H1 (cell line): ENCODE measurements at regions of chr6 and their contacts with region 1.

Region 1: GRCh38 chr6:8102122-8102958 is at the start of gene EEF1E1:
- DNase-seq: peak; percentile 89 to 93
- H3K4me3 ChIP-seq: peak within 1 kb of the TSS; percentile 86 to 94 (median 88)
- H3K27ac ChIP-seq: peak within 1 kb of the TSS; percentile 83
- H3K4me1 ChIP-seq: peaks cover 0 to 4% (median under 1%) of the 10 kb centered on the region in 4 experiments; a peak in 1 of 7 replicates
- H3K27me3 ChIP-seq: no peaks in the 10 kb centered on the region
- CTCF ChIP-seq: no peak
- EP300 ChIP-seq: no peak
- POLR2A ChIP-seq: peak; percentile 92 to 96
- RAD21 ChIP-seq: no peak
- total RNA-seq, gene EEF1E1: 96.8 and 97.2 TPM in 2 replicates

Region 2: GRCh38 chr6:8063761-8064637 is 38.3 kb before region 1 on chr6 and contains the start of gene BLOC1S5:
- CTCF ChIA-PET with region 1: interaction called, 9 read pairs
- POLR2A ChIA-PET with region 1: interaction called, 19 read pairs
- DNase-seq: peak; percentile 93 to 98
- H3K4me3 ChIP-seq: peak within 1 kb of the TSS; percentile 83 to 94 (median 88)
- H3K27ac ChIP-seq: peak within 1 kb of the TSS; percentile 77
- H3K4me1 ChIP-seq: peaks cover 0 to 5% (median 4%) of the 10 kb centered on the region in 4 experiments; a peak in 4 of 7 replicates
- H3K27me3 ChIP-seq: no peaks in the 10 kb centered on the region
- CTCF ChIP-seq: no peak
- EP300 ChIP-seq: peak in 1 of 2 experiments; percentile 86; a peak in 1 of 3 replicates
- POLR2A ChIP-seq: peak; percentile 41 to 81
- RAD21 ChIP-seq: no peak
- total RNA-seq, gene BLOC1S5: 15.4 and 17.2 TPM in 2 replicates

Region 3: GRCh38 chr6:8086755-8087306 is 15.5 kb before region 1 on chr6:
- CTCF ChIA-PET with region 1: no interaction called
- POLR2A ChIA-PET with region 1: interaction called, 15 read pairs
- DNase-seq: no peak
- H3K4me3 ChIP-seq: no peak overlapping the region
- H3K27ac ChIP-seq: no peak overlapping the region
- H3K4me1 ChIP-seq: no peaks in the 10 kb centered on the region
- H3K27me3 ChIP-seq: no peaks in the 10 kb centered on the region
- CTCF ChIP-seq: no peak
- EP300 ChIP-seq: no peak
- POLR2A ChIP-seq: no peak
- RAD21 ChIP-seq: no peak

Region 4: DNA sequence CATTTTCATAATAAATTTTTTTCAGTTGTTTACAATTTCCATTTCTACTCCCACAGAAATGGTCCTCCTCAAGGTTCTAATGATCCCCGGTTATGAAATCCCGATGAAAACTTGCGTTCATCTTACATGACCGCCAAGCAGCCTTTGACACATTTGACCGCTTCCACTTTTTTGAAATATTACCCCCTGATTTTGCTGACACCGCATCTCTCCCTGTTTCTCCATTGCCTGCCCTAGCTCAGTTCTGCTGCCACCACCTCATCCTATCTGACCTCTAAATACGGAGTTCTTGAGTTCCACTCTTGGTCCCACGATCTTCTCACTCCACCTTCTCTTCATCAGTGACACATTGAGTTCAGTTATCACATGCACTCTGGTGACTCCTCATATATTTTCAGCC is 258.9 kb after region 1 on chr6:
- CTCF ChIA-PET with region 1: no interaction called
- POLR2A ChIA-PET with region 1: no interaction called
- DNase-seq: no peak
- H3K4me3 ChIP-seq: no peak overlapping the region
- H3K27ac ChIP-seq: no peak overlapping the region
- H3K4me1 ChIP-seq: no peaks in the 10 kb centered on the region
- H3K27me3 ChIP-seq: no peaks in the 10 kb centered on the region
- CTCF ChIP-seq: no peak
- EP300 ChIP-seq: no peak
- POLR2A ChIP-seq: no peak
- RAD21 ChIP-seq: no peak